Mammary epithelial cell (primary cell): ENCODE measurements at regions of chr6 and their contacts with region 1.

Region 1: DNA sequence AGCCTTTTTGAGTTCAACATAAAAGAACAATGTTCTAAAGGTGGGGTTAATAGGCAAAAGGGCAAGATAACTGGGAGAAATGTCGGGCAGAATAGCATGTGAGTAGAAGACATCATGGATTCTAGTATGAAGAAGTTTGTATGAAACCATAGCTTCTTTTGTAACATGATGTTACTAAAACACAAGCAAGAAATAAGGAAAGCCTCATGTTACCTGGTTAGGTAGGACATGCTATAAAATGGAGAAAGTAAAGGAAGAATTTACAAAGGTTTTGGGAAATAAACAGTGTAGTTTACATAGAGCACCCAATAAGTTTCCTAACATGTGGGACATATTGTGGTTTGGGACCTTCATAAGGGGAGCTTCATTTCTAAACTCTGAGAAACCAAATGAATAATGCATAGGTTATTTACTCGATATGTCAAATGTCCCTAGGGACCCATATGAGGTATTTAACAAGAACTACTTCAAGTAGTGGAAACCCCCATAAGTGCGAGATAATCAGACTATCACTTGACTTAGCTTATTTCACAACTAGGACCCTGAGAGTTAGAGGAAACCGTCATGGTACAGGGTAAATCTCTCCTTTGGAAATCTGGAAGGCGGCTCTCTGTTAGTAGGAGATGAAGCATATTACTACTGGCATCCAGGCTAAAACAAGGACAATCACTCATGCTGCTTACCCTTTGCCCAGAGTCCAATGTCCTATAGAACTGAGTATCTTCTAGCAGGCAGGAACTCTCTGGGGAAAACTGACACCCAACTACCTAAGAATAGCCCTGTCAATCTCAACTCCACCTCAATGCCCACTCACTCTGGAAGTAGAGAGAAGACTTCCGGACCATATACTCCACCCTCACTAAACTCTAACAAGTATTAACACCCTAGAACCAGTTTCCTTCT is 57.5 kb downstream of the ILRUN start:
- DNase-seq: no peak
- H3K4me3 ChIP-seq: no peak overlapping the region
- H3K27ac ChIP-seq: no peak overlapping the region
- H3K4me1 ChIP-seq: no peaks in the 10 kb centered on the region
- H3K27me3 ChIP-seq: no peaks in the 10 kb centered on the region
- CTCF ChIP-seq: no peak

Region 2: DNA sequence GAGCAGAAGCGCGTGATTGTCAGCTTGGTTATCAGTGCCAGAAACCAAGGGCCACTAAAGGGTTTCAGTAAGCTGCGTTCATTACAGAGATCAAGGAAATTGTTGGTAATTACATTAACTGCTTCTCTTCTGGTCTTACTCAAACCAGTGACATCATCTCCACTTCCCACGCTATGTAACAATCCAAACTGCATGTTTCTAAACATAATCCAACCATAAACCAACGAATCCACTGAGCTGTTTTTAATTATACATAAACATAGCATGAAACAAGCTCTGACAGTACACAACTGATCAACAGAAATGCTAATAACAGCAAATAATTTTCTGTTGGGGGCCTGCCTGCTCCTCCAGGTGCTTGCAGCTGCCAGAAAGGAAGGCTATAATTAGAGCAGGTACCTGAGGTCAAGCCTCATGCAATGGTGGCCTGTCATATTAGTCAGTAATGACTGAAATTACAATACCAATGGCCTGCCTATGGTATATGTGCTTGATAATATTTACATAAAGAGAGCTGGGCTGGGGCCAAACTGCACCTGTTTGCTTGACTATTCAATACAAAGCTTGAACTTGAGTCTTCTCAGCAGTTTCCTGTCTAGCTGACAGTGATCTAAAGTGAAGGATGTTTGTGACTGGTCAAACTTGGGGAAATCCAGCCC is 17.4 kb after region 1 on chr6:
- CTCF ChIA-PET with region 1: interaction called, 19 read pairs
- dilution Hi-C with region 1: no loop called
- in situ Hi-C with region 1: no loop called
- intact Hi-C with region 1: no loop called
- DNase-seq: peak; percentile 30
- H3K4me3 ChIP-seq: peak overlapping the region in 2 of 3 experiments; percentile 45 to 53
- H3K27ac ChIP-seq: peak overlapping the region; percentile 91
- H3K4me1 ChIP-seq: peaks cover 12% of the 10 kb centered on the region
- H3K27me3 ChIP-seq: no peaks in the 10 kb centered on the region
- CTCF ChIP-seq: no peak